K562 (cell line): ENCODE measurements at regions of chr7 and their contacts with region 1.

Region 1: DNA sequence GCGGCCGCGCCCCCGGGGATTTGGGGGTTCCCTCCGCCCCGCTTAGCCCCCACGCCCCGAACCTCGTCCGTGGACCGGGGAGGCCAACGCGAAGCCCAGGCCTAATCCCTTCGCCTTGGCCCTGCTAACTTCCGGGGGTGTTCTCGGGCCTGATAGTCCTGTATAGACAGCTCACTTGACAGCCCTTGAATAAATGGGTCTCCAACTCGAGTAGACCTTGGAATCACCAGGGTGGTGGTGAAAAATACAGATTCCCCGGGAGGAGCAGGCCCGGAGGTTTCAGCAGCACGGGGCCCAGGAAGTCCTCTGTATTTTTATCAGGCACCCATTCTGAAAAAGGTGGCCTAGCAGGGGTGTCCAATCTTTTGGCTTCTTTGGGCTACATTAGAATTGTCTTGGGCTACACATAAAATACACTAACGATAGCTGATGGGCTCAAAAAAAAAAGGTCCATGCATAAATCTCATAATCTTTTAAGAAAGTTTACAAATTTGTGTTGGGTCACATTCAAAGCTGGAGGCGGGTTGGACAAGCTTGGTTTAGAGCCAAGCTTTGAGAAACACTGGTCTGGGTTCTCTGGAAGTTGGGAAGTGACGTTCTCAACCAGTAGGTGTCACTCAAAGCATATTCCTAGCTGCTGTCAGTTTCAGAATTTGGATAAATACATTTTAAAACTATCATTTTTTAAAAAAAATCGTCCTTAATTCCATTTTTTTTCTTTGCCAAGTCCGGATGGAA is 221.7 kb downstream of the PHTF2 start:
- DNase-seq: peak; percentile 77 to 88 (median 80)
- ATAC-seq: peak; percentile 82
- H3K4me3 ChIP-seq: 0 out of 2 replicates have a peak overlapping the region, but pooled peaks have one; percentile 47
- H3K27ac ChIP-seq: peak overlapping the region; percentile 63; the same call in 2 of the 3 replicates
- H3K4me1 ChIP-seq: peaks cover 18 to 26% of the 10 kb centered on the region in 2 experiments
- H3K27me3 ChIP-seq: peaks cover 4 to 7% of the 10 kb centered on the region in 2 experiments; a peak in 4 of 5 replicates
- CTCF ChIP-seq: peak; percentile 71 to 95 (median 78)
- EP300 ChIP-seq: no peak
- POLR2A ChIP-seq: no peak
- RAD21 ChIP-seq: peak; percentile 83 to 85

Region 2: DNA sequence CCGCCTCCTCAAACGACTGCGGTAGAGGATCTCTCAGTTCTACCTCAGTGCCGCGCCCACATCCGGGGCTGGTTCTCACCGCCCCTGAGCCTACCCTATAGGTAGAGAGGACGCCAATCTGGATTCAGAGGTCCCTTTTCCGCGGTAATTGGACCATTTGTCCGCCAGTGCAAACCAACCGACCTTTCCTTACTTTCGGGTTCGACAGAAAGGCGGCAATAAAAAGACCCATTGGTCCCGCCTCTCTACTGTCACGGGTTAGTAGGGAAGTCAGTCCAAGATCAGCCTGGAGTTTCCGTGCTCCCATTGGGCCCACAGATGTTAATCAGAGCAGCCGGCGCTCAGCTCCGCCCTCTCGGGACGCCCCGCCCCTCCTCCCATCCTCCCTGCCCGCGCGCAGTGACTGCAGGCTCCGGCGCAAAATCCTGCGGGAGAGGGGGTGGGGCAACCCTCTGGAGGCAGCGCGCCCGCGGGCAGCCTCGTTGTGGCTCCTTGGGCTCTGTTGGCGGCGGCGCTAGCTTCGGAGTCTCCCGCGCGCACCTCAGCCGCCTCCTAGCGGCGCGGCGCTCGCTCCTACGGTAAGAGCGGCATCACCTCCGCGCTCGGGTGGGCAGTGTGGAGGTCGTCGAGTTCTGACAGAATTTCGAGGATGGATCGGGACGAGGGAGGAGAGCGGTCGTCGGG is 221.8 kb before region 1 on chr7 and contains the starts of genes PHTF2 and TMEM60:
- CTCF ChIA-PET with region 1: no interaction called
- POLR2A ChIA-PET with region 1: no interaction called
- in situ Hi-C with region 1: no loop called
- intact Hi-C with region 1: loop called (anchors 10 kb)
- DNase-seq: peak; percentile 96 to 99 (median 97)
- ATAC-seq: peak; percentile 90
- H3K4me3 ChIP-seq: peak within 1 kb of the TSS; percentile 75
- H3K27ac ChIP-seq: peak within 1 kb of the TSS; percentile 86
- H3K4me1 ChIP-seq: peaks cover 16 to 24% of the 10 kb centered on the region in 2 experiments; a peak in 4 of 5 replicates
- H3K27me3 ChIP-seq: no peaks in the 10 kb centered on the region
- CTCF ChIP-seq: peak; percentile 55 to 69 (median 64)
- EP300 ChIP-seq: peak; percentile 47; the same call in 1 of the 2 replicates
- POLR2A ChIP-seq: peak; percentile 76
- RAD21 ChIP-seq: peak; percentile 47 to 60
- polyA plus RNA-seq, gene PHTF2: 17.9 to 18.2 TPM
- polyA plus RNA-seq, gene TMEM60: 136 to 140 TPM

Region 3: DNA sequence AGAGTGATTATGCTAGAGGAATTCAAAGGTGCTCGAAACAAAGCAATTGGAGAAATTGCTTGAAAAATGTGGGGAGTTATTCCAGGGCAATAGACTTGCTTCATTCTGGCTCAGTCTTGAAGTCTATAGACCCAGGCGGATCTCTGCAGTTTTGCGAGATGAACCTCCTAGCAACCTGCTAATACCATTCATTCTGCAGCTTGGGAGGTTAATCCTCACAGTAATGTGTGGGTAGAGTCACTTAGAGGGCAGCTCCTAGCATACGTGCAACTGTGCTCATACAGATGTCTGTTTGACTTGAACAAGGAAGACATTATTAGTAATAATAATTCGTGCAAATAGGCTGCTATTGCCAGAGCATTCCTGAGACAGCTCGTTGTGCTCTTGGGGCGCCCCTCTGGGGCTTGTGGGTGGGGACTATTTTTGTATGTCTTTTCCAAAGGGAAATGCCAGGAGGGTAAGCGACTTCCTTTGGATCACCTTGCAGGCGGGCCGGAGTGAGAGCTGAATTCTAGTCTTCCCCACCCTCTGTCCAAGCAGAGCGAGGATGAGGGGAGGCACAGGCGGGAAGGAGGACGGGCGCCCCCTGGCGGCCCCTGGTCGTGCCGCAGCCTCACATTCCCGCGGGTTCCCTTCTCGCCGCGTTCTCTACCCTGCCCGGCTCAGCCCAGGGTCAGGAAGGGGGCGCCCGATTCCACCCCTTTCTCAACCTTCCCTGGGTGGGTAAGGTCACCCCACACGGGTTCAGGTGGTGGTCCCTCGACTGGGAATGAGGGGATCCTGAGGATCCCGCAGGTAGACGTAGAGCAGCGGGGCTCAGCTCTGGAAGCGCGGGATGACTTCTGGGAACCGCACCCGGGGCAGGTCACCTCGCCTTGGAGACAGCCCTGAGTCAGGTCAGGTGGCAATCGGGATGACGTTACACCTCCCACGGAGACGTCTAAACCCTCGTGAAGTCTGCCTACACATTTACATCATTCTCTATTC is 19.8 kb after region 1 on chr7:
- CTCF ChIA-PET with region 1: interaction called, 7 read pairs
- POLR2A ChIA-PET with region 1: interaction called, 6 read pairs
- in situ Hi-C with region 1: no loop called
- intact Hi-C with region 1: loop called (anchors 1 kb)
- DNase-seq: peak; percentile 76 to 85 (median 81)
- ATAC-seq: peak; percentile 99
- H3K4me3 ChIP-seq: no peak overlapping the region
- H3K27ac ChIP-seq: no peak overlapping the region
- H3K4me1 ChIP-seq: peaks cover 0 to 6% of the 10 kb centered on the region in 2 experiments; a peak in 1 of 5 replicates
- H3K27me3 ChIP-seq: peaks cover 19 to 27% of the 10 kb centered on the region in 2 experiments
- CTCF ChIP-seq: peak; percentile 85 to 92 (median 88)
- EP300 ChIP-seq: no peak
- POLR2A ChIP-seq: no peak
- RAD21 ChIP-seq: peak; percentile 88 to 93

Region 4: DNA sequence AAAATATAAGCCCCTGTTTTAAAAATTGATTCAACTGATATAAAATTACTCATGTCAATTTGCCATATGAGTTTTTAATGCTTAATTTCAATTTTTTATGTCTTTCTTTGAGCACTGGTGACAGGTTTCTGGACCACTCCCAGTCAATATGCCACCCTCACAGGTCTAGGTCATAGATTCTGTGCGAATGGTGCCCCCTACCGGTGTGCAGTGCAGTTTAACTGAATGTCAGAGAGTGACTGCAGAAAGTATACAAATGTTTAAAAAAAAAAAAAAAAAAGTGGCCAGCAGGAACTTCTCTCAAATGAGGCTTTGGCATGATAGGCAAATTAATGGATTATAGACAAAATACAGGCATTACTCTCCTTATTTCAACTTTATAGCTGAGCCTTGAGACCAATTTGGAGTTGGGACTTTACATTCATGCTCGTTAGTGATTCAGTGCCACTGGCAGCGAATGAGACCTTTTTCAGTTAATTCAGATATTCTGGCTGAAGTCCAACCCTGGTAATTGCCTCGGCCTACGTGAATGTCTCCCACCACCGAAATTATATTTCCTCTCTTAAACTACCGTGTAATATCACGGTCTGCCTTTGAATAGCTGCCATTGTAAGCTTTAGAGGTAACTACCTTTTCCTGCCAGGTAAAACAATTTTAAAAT is 205.9 kb after region 1 on chr7:
- CTCF ChIA-PET with region 1: interaction called, 7 read pairs
- POLR2A ChIA-PET with region 1: no interaction called
- in situ Hi-C with region 1: no loop called
- intact Hi-C with region 1: loop called (anchors 1 kb)
- DNase-seq: peak; percentile 48 to 68 (median 64)
- ATAC-seq: peak; percentile 91
- H3K4me3 ChIP-seq: no peak overlapping the region
- H3K27ac ChIP-seq: no peak overlapping the region
- H3K4me1 ChIP-seq: no peaks in the 10 kb centered on the region
- H3K27me3 ChIP-seq: no peaks in the 10 kb centered on the region
- CTCF ChIP-seq: peak; percentile 55 to 66 (median 55)
- EP300 ChIP-seq: no peak
- POLR2A ChIP-seq: no peak
- RAD21 ChIP-seq: peak; percentile 54 to 55; a peak in 3 of 4 replicates

Region 5: DNA sequence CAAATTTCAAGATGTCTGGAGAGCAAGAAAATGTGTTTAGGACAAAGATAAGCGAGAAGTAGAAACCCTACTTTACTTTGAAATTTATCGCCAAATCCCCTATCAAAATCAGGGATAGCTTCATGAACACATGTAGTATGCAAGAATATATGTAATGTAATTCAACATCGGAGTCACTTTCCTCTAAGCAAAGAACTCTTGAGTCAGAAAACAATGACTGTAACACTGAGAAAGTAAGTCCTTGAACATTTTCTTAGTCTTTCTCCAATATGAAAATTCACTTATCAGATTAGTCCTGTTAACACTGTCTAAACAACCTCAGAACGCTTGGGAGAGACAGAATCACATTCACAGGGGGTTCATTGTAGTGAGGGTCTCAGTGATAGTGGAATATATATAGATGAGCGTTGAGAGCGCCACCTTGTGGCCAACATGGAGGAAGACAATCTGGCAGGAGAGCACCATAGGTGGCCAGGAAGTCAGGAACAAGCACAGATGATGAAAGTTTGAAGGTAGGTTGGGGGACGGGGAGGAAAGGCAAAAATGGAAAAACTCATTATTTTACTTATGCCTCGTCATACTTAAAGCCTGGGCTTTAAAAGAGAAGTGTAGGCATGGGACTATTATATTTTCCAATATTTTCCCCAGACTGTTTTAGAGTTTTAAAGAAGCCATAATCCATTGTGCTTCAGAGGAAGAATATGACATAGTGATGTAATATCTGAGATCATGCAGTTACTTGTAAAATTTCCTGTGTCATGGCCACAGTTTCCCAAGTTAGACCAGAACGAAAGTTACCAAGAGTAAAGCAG is 1998.8 kb after region 1 on chr7:
- CTCF ChIA-PET with region 1: no interaction called
- POLR2A ChIA-PET with region 1: no interaction called
- in situ Hi-C with region 1: no loop called
- intact Hi-C with region 1: loop called (anchors 5 kb)
- DNase-seq: peak; percentile 62 to 69 (median 66)
- ATAC-seq: peak; percentile 86
- H3K4me3 ChIP-seq: no peak overlapping the region
- H3K27ac ChIP-seq: no peak overlapping the region
- H3K4me1 ChIP-seq: no peaks in the 10 kb centered on the region
- H3K27me3 ChIP-seq: no peaks in the 10 kb centered on the region
- CTCF ChIP-seq: peak; percentile 55 to 83 (median 69)
- EP300 ChIP-seq: no peak
- POLR2A ChIP-seq: no peak
- RAD21 ChIP-seq: peak; percentile 34 to 62; a peak in 3 of 4 replicates